Activated CD4-positive, alpha-beta memory T cell treated with anti-CD3 and anti-CD28 coated beads, Interleukin-2, amount 10 ng/mL, durations not matched to agents 7 days and 5 days (primary cell): ENCODE measurements at regions of chr11 and their contacts with region 1.

Region 1: GRCh38 chr11:6481012-6481923 is at the starts of genes ARFIP2 and TIMM10B:
- DNase-seq: peak; percentile 98
- H3K4me3 Mint-ChIP-seq: peak within 1 kb of the TSS; percentile 97
- H3K27ac Mint-ChIP-seq: peak within 1 kb of the TSS; percentile 97
- H3K4me1 Mint-ChIP-seq: peaks cover 41% of the 10 kb centered on the region
- H3K27me3 Mint-ChIP-seq: no peaks in the 10 kb centered on the region
- total RNA-seq, gene ARFIP2: 38.5 to 39.2 TPM
- total RNA-seq, gene TIMM10B: 39.0 to 40.5 TPM

Region 2: GRCh38 chr11:5878564-5878963 is 602.7 kb before region 1 on chr11:
- CTCF ChIA-PET with region 1: no interaction called
- POLR2A ChIA-PET with region 1: no interaction called
- DNase-seq: no peak
- H3K4me3 Mint-ChIP-seq: no peak overlapping the region
- H3K27ac Mint-ChIP-seq: no peak overlapping the region
- H3K4me1 Mint-ChIP-seq: no peaks in the 10 kb centered on the region
- H3K27me3 Mint-ChIP-seq: peaks cover 5% of the 10 kb centered on the region

Region 3: DNA sequence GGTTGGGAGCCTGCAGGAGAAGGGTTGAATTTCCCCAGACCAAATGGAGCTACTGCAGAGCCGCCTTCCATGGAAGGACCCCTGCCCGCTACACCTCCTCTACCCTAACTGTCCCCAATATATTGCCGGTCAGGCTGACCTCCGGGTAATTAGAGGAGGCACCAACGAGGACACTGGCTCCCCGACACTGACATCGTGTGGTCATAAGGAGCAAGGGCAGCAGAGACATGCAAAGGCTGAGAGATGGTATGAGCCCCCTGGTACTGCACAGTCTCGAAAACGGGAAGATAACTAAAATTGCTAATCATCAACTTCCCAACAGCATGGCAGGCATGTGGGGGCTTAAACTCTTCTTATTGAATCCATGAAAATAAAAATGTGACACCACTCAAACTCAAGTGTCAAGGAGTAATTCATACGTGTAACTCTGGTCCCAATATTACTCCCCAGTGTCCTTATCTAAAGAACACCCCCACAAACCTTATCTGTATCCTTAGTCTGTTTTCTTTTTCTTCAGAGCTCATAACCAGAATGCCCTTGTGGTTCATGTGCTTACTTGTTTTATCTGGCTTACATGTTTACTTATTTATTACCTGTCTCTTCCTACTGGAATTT is 165.3 kb before region 1 on chr11:
- CTCF ChIA-PET with region 1: interaction called, 4 read pairs
- POLR2A ChIA-PET with region 1: interaction called, 12 read pairs
- DNase-seq: peak; percentile 42
- H3K4me3 Mint-ChIP-seq: no peak overlapping the region
- H3K27ac Mint-ChIP-seq: no peak overlapping the region
- H3K4me1 Mint-ChIP-seq: peaks cover 30% of the 10 kb centered on the region
- H3K27me3 Mint-ChIP-seq: peaks cover 25% of the 10 kb centered on the region

Region 4: DNA sequence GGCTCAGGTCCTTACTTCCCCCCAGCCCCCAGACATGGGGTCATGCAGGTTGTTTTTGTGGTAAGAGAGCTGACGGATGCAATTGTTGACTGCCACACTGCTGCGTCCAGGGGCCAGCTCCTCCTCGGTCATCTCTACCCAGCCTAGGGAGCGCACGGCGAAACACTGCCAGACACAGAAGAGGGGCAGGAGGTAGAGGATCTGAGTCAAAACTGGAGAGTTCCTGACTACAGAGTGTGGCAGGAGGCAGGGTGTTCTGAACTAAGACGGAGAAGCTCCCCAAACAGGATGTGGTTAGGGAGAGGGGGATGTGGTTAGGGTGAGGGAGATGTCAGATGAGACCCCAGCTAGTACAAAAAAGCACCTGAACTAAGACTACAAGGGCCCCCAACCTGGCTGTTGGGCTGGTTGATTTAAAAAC is 78.7 kb before region 1 on chr11:
- CTCF ChIA-PET with region 1: no interaction called
- POLR2A ChIA-PET with region 1: interaction called, 19 read pairs
- DNase-seq: peak; percentile 87
- H3K4me3 Mint-ChIP-seq: peak overlapping the region; percentile 67
- H3K27ac Mint-ChIP-seq: peak overlapping the region; percentile 97
- H3K4me1 Mint-ChIP-seq: peaks cover 64% of the 10 kb centered on the region
- H3K27me3 Mint-ChIP-seq: no peaks in the 10 kb centered on the region

Region 5: DNA sequence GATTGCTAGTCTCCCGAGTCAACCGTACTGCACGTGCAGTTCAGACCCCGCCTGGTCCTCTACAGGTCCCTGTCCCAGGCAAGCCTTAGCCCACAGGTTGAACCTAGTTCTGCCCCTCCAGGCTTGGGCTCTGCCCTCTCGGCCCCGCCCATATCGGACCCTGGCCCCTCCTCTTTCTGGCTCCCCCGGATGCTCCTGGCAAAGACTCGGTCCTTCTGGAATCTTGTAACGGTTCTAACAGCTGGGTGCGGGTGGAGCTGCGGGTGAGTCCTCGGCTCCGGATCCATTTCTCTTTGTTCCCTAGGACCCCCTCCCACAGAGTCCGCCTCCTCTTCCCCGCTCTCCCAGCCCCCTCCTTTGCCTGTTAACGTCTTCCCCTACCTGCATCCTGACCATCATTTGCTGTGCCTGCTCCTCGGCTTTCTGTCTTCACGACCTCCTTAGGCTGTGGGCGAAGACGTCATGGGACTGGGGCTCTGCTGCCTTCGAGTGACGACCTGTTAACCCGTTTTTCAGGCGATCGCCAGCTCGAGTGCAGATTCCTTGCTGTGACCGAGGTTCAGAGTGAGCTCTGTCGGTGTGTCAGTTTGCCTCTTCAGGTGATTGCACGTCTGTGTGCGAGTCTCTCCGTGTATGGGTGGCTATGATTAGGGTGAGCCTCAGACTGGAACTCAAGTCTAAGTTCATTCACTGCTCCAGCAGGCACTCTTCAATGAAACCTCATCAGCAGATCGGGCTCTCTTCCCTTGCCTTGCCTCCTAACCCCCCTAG is 16.0 kb after region 1 on chr11 and contains the start of gene DNHD1:
- CTCF ChIA-PET with region 1: interaction called, 6 read pairs
- POLR2A ChIA-PET with region 1: interaction called, 19 read pairs
- DNase-seq: no peak
- H3K4me3 Mint-ChIP-seq: no peak within 1 kb of the TSS
- H3K27ac Mint-ChIP-seq: no peak within 1 kb of the TSS
- H3K4me1 Mint-ChIP-seq: peaks cover 4% of the 10 kb centered on the region
- H3K27me3 Mint-ChIP-seq: no peaks in the 10 kb centered on the region
- total RNA-seq, gene DNHD1: 18.5 to 19.6 TPM

Region 6: DNA sequence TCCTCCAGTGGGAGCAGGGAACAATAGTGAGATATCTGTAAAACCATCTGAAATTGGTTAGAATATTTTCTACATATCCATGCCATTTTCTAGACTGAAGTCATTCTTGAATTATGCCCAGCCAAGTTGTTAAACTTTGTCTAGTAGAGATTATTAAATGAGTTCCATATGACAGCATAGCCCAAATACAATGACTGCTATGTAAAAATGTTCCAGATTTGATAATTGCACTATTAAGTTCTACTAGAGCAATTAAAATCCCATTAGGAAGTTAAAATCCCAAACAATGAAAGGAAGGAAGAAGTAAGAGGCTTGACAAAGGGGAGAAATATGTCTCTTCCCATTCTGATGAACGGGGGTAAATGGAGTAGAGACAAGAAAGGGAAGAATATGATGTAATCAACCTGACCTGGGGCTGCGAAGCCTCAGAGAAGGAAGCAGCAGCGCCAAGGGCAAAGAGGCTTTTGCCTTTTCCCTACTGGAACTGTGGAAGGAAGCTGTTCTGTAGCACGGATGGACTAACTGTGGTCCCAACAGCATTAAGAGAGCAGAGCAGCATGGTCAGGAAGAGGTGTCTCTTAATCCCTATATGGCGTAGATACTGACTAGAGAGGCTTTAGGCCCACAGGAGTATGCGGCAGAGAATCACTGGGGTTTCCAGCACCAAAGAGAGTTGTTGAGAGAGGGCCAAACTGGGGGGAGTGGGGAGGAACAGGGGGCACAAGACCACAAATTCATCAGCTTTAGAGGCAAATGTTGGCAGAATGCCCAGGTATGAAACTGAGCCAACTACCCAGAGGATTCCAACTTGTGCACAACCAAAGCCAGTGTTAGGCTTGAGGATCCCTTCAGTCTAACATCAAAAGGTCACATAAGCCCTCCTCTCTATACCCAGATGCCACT is 95.5 kb after region 1 on chr11:
- CTCF ChIA-PET with region 1: no interaction called
- POLR2A ChIA-PET with region 1: no interaction called
- DNase-seq: no peak
- H3K4me3 Mint-ChIP-seq: no peak overlapping the region
- H3K27ac Mint-ChIP-seq: no peak overlapping the region
- H3K4me1 Mint-ChIP-seq: peaks cover 5% of the 10 kb centered on the region
- H3K27me3 Mint-ChIP-seq: no peaks in the 10 kb centered on the region

Region 7: DNA sequence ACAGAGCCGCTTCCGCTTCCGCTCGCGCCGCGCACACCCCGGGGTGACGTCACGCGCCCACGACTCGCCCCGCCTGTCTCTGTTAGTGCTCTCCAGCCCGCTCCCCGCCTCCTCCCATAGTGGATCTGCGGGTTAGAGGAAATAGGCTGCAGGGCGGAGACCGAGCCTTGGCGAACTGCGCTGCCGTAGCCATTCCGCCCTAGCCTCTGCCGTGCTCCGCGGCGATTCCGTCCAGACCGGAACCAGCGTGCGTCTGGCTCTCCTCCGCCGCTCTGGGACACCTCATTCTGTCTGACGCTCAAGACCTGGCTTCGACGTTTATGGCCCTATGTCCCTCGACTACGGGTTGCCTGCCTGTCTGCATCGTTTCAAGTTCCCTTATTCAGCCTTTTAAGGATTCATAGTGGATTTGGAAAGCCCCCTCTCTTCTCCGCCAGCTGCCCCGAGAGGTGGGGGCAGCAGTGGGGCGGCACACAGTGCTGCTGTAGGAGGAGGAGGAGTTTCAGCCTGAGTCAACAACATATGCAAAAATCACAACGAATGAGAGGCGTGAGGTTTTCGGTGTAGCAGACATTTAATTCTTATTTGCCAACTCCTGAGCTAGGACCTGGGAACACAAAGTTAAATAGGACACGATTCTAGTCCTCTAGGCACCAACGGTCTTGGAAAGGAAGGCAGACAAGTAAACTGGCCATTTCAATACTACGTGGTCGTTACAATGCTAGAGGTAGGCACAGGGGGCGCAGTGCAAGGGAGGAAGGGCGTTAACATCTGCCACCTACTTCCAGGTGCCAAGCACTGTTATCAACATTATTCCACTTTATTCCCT is 131.2 kb after region 1 on chr11 and contains the start of gene TAF10:
- CTCF ChIA-PET with region 1: interaction called, 6 read pairs
- POLR2A ChIA-PET with region 1: interaction called, 18 read pairs
- DNase-seq: peak; percentile 96
- H3K4me3 Mint-ChIP-seq: peak within 1 kb of the TSS; percentile 88
- H3K27ac Mint-ChIP-seq: peak within 1 kb of the TSS; percentile 87
- H3K4me1 Mint-ChIP-seq: peaks cover 47% of the 10 kb centered on the region
- H3K27me3 Mint-ChIP-seq: no peaks in the 10 kb centered on the region
- total RNA-seq, gene TAF10: 159 to 161 TPM

Region 8: DNA sequence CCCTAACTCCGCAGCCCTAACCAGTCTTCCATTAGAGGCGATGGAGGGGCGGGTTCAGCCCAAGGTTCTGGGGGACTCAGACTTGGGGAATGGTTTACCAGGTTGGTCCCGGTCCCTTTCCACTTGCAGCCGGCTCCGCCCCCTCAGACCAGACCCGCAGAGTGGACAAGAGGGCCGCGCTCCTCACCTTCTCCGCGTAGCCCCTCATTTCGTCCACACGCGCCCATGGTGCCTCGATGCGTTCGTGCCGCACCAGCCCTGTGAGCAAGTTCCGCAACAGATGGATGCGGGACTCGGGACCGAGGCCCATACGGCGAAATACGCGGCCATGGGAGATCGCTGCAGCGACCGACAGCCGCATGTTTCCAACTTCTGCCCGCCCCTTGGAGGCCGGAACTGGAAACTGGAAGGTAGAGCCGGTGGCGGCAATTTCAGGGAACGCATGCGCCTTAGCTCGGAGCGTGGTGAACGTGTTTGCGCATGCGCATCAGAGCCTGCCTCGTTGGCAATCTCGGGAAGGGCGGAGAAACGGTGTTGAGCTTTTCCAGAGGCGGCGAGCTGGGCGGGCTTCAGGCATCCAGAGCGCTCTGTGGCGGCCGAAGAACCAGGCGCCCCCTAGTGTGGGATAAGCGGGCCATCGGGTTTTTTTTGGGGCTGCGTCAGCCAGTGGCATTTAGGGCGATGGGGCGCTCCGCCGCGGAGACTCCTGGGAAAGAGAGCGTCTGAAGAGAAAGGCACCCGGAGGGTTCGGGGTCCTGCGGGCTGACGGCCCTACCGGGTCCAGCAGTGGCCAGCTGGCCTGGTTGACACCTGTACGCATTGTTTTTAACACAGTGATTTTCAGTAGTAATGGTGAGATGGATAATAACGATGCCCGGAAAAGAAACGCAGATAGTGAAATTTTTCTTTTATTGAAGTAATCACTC is 201.9 kb after region 1 on chr11 and contains the start of gene MRPL17:
- CTCF ChIA-PET with region 1: interaction called, 15 read pairs
- POLR2A ChIA-PET with region 1: interaction called, 12 read pairs
- DNase-seq: peak; percentile 100
- H3K4me3 Mint-ChIP-seq: peak within 1 kb of the TSS; percentile 96
- H3K27ac Mint-ChIP-seq: peak within 1 kb of the TSS; percentile 95
- H3K4me1 Mint-ChIP-seq: peaks cover 31% of the 10 kb centered on the region
- H3K27me3 Mint-ChIP-seq: no peaks in the 10 kb centered on the region
- total RNA-seq, gene MRPL17: 54.1 to 56.3 TPM